ENCODE measurements at regions of chr7 and their contacts with region 1.

Region 1: DNA sequence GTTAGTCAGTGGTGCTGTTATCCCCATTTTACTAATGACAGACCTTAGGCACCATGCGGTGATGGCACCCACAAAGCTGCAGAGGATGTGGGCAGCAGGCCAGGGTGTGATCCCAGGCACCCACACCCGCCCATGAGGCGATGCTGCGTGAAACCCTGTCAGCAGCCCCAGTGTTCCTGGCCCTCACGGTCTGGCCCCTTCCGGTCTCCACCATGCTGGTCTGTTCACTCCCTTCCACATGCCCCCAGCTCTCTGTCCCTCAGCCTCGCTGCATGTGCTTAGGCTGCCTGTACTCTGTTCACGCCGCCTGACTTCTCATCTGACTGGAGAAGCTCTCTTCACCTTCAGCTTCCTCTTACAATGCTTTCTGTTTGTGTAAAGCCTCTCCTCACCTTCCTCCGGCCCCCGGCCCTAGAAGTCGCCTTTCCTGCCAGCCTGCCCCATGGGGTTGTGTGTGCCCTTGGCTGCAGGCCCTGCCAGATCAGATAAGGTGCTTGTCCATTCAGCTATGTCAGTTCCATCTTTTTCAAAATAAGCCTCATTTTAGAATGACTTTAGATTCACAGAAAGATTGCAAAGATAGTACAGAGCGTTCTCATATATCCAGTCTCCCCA is 17.6 kb upstream of the ORAI2 start:
- DNase-seq: no peak
- ATAC-seq: peak in 2 of 4 donors; percentile 18 to 21
- H3K4me3 ChIP-seq: no peak overlapping the region
- H3K27ac ChIP-seq: peak overlapping the region in 1 of 12 donors; percentile 81
- H3K4me1 ChIP-seq: peaks cover 0 to 21% (median 6%) of the 10 kb centered on the region in 12 donors
- H3K27me3 ChIP-seq: no peaks in the 10 kb centered on the region
- CTCF ChIP-seq: no peak
- POLR2A ChIP-seq: no peak

Region 2: DNA sequence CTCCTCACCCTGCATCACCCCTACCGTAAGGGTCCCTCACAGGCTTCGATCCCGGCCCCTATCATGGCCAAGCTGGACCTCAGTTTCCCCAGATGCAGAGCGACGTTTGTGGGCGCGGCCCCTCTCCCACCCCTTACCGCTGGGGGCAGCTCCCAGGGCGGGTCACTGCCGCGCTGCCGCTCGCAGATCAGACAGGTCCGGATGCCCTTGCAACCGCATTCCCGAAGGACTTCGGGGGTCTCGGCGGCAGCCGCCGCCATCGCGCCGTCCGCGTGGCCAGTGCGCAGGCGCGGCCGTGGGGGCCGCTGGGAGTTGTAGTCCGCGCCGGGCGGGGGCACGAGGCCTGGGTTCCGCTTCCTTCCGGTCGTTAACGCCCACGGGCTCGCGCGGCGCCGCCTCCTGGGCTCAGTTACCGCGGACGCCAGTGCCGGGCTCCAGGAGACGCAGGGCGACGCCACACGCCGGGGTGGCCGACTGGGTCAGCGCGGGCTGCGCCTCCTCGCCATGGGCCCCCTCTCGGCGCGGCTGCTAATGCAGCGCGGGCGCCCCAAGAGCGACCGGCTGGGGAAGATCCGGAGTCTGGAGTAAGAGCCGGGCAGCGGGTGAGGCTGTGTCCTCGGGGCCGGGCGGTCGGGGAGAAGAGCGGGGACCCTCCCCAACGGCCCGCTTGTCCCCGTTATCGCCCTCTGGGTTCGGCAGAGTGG is 48.9 kb after region 1 on chr7 and contains the starts of genes ALKBH4 and LRWD1:
- intact Hi-C with region 1: loop called in 1 of 10 experiments (anchors 5 kb)
- DNase-seq: peak; percentile 94 to 99 (median 96)
- ATAC-seq: peak; percentile 83 to 97 (median 96)
- H3K4me3 ChIP-seq: peak within 1 kb of the TSS; percentile 70 to 100 (median 90)
- H3K27ac ChIP-seq: peak within 1 kb of the TSS in 11 of 12 donors; percentile 53 to 89 (median 77)
- H3K4me1 ChIP-seq: peaks cover 5 to 23% (median 19%) of the 10 kb centered on the region in 12 donors
- H3K27me3 ChIP-seq: no peaks in the 10 kb centered on the region
- CTCF ChIP-seq: peak in 8 of 12 donors; percentile 6 to 55 (median 24)
- POLR2A ChIP-seq: peak in 1 of 2 donors; percentile 84
- total RNA-seq, gene ALKBH4: 4.9 to 19.4 (median 6.5) TPM
- total RNA-seq, gene LRWD1: 7.6 to 24.9 (median 9.7) TPM

Measured in heart left ventricle (tissue), 16 donors.